Left cardiac atrium (tissue), 4 donors: ENCODE measurements at regions of chr7 and their contacts with region 1.

Region 1: GRCh38 chr7:142345811-142346210 is 88.0 kb upstream of the PRSS58 start:
- DNase-seq: no peak
- ATAC-seq: no peak

Region 2: GRCh38 chr7:141710301-141710700 is 635.5 kb before region 1 on chr7:
- intact Hi-C with region 1: no loop called
- DNase-seq: no peak
- ATAC-seq: no peak

Region 3: GRCh38 chr7:142308326-142308725 is 37.5 kb before region 1 on chr7:
- intact Hi-C with region 1: loop called in 1 of 2 experiments (anchors 2 kb)
- DNase-seq: no peak
- ATAC-seq: no peak